ENCODE measurements at regions of chr6 and their contacts with region 1.

Region 1: DNA sequence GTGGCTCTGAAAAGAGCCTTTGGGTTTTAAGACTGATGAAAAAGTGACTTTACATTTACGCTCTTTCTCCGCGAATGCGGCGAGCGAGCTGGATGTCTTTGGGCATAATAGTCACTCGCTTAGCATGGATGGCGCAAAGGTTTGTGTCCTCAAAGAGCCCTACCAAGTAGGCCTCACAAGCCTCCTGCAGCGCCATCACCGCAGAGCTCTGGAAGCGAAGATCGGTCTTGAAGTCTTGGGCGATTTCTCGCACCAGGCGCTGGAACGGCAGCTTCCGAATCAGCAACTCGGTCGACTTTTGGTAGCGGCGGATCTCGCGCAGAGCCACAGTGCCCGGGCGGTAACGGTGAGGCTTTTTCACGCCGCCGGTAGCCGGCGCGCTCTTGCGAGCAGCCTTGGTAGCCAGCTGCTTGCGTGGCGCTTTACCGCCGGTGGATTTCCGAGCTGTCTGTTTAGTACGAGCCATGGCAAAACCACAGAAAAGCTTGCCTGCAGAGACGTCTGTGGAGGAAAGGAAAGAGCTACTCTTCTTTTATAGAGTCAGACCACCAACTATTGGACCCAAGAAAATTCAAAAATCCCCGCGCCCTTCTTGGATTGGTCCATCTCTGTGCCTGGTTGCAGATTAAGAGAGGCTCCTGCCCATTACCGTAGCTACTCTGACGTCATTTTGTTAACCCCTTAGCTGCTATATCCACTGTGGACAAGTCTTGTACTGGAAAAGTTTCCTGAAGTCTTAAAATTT is 55.5 kb upstream of the HFE start:
- DNase-seq: peak; percentile 69 to 87 (median 74)
- ATAC-seq: peak; percentile 82 to 88 (median 86)
- H3K4me3 ChIP-seq: peak overlapping the region; percentile 21 to 69 (median 60)
- H3K27ac ChIP-seq: peak overlapping the region in 8 of 12 donors; percentile 58 to 87 (median 80)
- H3K4me1 ChIP-seq: peaks cover 0 to 39% (median 20%) of the 10 kb centered on the region in 12 donors
- H3K27me3 ChIP-seq: no peaks in the 10 kb centered on the region
- CTCF ChIP-seq: peak in 3 of 12 donors; percentile 18 to 34 (median 27)
- POLR2A ChIP-seq: no peak

Region 2: GRCh38 chr6:25902071-25902470 is 129.7 kb before region 1 on chr6:
- intact Hi-C with region 1: no loop called
- DNase-seq: no peak
- ATAC-seq: no peak
- H3K4me3 ChIP-seq: no peak overlapping the region
- H3K27ac ChIP-seq: no peak overlapping the region
- H3K4me1 ChIP-seq: no peaks in the 10 kb centered on the region
- H3K27me3 ChIP-seq: peaks cover 0 to 19% (median 0%) of the 10 kb centered on the region in 9 donors
- CTCF ChIP-seq: no peak
- POLR2A ChIP-seq: no peak

Region 3: DNA sequence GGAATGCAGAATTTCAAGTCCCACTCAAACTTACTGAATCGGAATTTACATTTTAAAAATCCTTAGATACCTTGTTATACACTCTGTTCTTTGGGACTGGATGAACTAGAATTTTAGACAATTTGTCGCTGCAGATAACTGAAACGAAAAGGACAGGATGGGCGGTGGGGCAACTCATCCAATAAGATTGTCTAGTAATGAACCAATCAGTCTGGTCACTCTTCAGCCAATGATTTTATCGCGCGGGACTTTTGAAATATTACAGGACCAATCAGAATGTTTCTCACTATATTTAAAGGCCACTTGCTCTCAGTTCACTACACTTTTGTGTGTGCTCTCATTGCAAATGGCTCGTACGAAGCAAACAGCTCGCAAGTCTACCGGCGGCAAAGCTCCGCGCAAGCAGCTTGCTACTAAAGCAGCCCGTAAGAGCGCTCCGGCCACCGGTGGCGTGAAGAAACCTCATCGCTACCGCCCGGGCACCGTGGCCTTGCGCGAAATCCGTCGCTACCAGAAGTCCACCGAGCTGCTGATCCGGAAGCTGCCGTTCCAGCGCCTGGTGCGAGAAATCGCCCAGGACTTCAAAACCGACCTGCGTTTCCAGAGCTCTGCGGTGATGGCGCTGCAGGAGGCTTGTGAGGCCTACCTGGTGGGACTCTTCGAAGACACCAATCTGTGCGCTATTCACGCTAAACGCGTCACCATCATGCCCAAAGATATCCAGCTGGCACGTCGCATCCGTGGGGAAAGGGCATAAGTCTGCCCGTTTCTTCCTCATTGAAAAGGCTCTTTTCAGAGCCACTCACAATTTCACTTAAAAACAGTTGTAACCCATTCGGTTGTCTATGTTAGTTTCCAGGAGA is 13.5 kb after region 1 on chr6:
- intact Hi-C with region 1: loop called in 2 of 10 experiments (anchors 1 to 2 kb)
- DNase-seq: peak; percentile 66 to 90 (median 81)
- ATAC-seq: peak; percentile 78 to 83 (median 80)
- H3K4me3 ChIP-seq: peak overlapping the region; percentile 24 to 68 (median 56)
- H3K27ac ChIP-seq: peak overlapping the region; percentile 67 to 97 (median 92)
- H3K4me1 ChIP-seq: peaks cover 0 to 23% (median 12%) of the 10 kb centered on the region in 12 donors
- H3K27me3 ChIP-seq: no peaks in the 10 kb centered on the region
- CTCF ChIP-seq: no peak
- POLR2A ChIP-seq: peak; percentile 5 to 45

Region 4: GRCh38 chr6:26196846-26197648 is 165.3 kb after region 1 on chr6:
- intact Hi-C with region 1: loop called in 5 of 10 experiments (anchors 5 to 10 kb)
- DNase-seq: peak; percentile 75 to 82 (median 79)
- ATAC-seq: peak; percentile 37 to 79 (median 66)
- H3K4me3 ChIP-seq: peak overlapping the region; percentile 15 to 77 (median 69)
- H3K27ac ChIP-seq: peak overlapping the region in 11 of 12 donors; percentile 60 to 96 (median 84)
- H3K4me1 ChIP-seq: peaks cover 0 to 46% (median 20%) of the 10 kb centered on the region in 12 donors
- H3K27me3 ChIP-seq: peaks cover 0 to 18% (median 0%) of the 10 kb centered on the region in 9 donors
- CTCF ChIP-seq: no peak
- POLR2A ChIP-seq: peak in 1 of 2 donors; percentile 82

Measured in heart left ventricle (tissue), 16 donors.